ENCODE measurements at regions of chr19 and their contacts with region 1.

Region 1: DNA sequence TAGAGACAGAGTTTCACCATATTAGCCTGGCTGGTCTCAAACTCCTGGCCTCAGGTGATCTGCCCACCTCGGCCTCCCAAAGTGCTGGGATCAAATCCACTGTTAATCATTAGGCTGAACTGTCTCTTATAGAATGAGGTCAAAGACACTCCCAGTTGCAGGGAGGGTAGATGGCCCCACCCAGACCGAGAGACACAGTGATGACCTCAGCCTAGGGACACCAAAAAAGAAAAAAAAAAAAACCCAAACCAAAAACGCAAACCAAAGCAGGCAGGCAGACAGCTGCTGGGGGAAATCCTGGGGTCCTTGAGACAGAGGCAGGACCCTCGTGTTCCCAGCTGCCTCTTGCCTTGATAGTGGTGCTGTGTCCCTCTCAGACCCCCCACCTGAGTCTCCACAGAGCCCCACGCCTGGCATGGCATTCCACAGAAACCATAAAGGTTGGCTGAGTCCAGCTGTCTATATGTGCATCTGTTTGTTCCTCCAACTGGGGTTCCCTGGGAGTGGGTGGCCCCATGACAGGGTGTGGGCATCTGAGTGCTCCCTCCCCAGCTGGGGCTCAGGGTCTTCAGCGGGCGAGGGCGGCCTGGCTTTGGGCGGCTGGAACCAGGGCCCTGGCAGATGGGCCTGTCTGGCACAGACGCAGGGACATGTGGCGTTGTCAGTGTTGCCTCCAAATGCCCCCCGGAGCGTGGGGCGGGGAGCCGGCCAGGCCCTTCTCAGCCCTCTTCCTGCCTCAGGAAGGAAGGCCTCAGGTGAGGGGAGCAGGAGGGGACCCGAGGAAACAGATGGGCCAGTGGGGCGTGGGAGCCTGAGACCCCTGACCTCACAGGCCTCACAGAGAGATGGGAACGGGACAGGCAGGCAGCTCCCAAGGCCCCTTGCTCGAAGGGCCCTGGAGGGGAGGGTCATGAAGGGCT is 5.2 kb downstream of the DAND5 start:
- DNase-seq: peak in 1 of 5 donors; percentile 34
- H3K4me3 ChIP-seq: no peak overlapping the region
- H3K27ac ChIP-seq: no peak overlapping the region
- H3K4me1 ChIP-seq: peaks cover 2% of the 10 kb centered on the region
- H3K27me3 ChIP-seq: no peaks in the 10 kb centered on the region
- CTCF ChIP-seq: no peak
- EP300 ChIP-seq: no peak
- POLR2A ChIP-seq: no peak

Region 2: GRCh38 chr19:12838182-12838885 is 136.2 kb before region 1 on chr19 and contains the start of gene MAST1:
- intact Hi-C with region 1: no loop called
- DNase-seq: no peak
- H3K4me3 ChIP-seq: no peak within 1 kb of the TSS
- H3K27ac ChIP-seq: no peak within 1 kb of the TSS
- H3K4me1 ChIP-seq: peaks cover 5% of the 10 kb centered on the region
- H3K27me3 ChIP-seq: peaks cover 13% of the 10 kb centered on the region
- CTCF ChIP-seq: no peak
- EP300 ChIP-seq: no peak
- POLR2A ChIP-seq: no peak
- total RNA-seq, gene MAST1: 0.25 to 1.4 (median 1.1) TPM

Region 3: GRCh38 chr19:13093407-13094105 is 119.0 kb after region 1 on chr19:
- intact Hi-C with region 1: loop called in 2 of 4 experiments (anchors 2 kb)
- DNase-seq: peak; percentile 72 to 89 (median 85)
- H3K4me3 ChIP-seq: no peak overlapping the region
- H3K27ac ChIP-seq: peak overlapping the region in 1 of 2 donors; percentile 87
- H3K4me1 ChIP-seq: peaks cover 29% of the 10 kb centered on the region
- H3K27me3 ChIP-seq: no peaks in the 10 kb centered on the region
- CTCF ChIP-seq: peak; percentile 94 to 97 (median 97)
- EP300 ChIP-seq: no peak
- POLR2A ChIP-seq: peak; percentile 19

Region 4: DNA sequence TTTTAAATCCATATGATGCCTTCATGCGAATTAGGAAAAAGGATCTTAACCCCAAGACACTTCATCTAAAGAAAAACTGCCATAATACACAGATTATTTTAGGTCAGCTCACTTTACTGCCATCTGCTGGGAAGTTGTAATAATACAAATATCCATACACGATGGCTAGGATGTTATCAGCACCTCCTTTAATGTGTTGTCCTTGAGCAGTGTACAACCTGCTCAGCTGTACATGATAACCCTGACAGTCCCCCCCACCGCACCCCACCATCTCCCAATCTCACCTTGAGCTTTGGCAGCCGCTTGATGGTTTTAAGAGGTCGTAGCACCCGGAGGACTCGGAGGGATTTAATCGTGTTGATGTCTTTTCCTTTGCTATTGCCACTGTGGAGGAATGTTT is 287.9 kb after region 1 on chr19:
- intact Hi-C with region 1: loop called (anchors 5 kb)
- DNase-seq: no peak
- H3K4me3 ChIP-seq: no peak overlapping the region
- H3K27ac ChIP-seq: no peak overlapping the region
- H3K4me1 ChIP-seq: no peaks in the 10 kb centered on the region
- H3K27me3 ChIP-seq: no peaks in the 10 kb centered on the region
- CTCF ChIP-seq: peak; percentile 14 to 62 (median 40)
- EP300 ChIP-seq: no peak
- POLR2A ChIP-seq: no peak

Region 5: GRCh38 chr19:13588957-13589833 is 614.6 kb after region 1 on chr19:
- intact Hi-C with region 1: loop called in 3 of 4 experiments (anchors 5 to 10 kb)
- DNase-seq: peak; percentile 40 to 76 (median 62)
- H3K4me3 ChIP-seq: no peak overlapping the region
- H3K27ac ChIP-seq: no peak overlapping the region
- H3K4me1 ChIP-seq: no peaks in the 10 kb centered on the region
- H3K27me3 ChIP-seq: no peaks in the 10 kb centered on the region
- CTCF ChIP-seq: peak; percentile 50 to 80 (median 54)
- EP300 ChIP-seq: no peak
- POLR2A ChIP-seq: no peak